Breast epithelium (tissue), 4 donors: ENCODE measurements at regions of chr13 and their contacts with region 1.

Region 1: GRCh38 chr13:106835477-106835876 is 267.5 kb upstream of the ARGLU1 start:
- DNase-seq: no peak
- H3K4me3 ChIP-seq: no peak overlapping the region
- H3K27ac ChIP-seq: no peak overlapping the region
- H3K4me1 ChIP-seq: no peaks in the 10 kb centered on the region
- H3K27me3 ChIP-seq: no peaks in the 10 kb centered on the region
- CTCF ChIP-seq: no peak
- POLR2A ChIP-seq: no peak

Region 2: GRCh38 chr13:105838231-105838630 is 997.2 kb before region 1 on chr13:
- intact Hi-C with region 1: no loop called
- DNase-seq: no peak
- H3K4me3 ChIP-seq: no peak overlapping the region
- H3K27ac ChIP-seq: no peak overlapping the region
- H3K4me1 ChIP-seq: no peaks in the 10 kb centered on the region
- H3K27me3 ChIP-seq: no peaks in the 10 kb centered on the region
- CTCF ChIP-seq: no peak
- POLR2A ChIP-seq: no peak

Region 3: DNA sequence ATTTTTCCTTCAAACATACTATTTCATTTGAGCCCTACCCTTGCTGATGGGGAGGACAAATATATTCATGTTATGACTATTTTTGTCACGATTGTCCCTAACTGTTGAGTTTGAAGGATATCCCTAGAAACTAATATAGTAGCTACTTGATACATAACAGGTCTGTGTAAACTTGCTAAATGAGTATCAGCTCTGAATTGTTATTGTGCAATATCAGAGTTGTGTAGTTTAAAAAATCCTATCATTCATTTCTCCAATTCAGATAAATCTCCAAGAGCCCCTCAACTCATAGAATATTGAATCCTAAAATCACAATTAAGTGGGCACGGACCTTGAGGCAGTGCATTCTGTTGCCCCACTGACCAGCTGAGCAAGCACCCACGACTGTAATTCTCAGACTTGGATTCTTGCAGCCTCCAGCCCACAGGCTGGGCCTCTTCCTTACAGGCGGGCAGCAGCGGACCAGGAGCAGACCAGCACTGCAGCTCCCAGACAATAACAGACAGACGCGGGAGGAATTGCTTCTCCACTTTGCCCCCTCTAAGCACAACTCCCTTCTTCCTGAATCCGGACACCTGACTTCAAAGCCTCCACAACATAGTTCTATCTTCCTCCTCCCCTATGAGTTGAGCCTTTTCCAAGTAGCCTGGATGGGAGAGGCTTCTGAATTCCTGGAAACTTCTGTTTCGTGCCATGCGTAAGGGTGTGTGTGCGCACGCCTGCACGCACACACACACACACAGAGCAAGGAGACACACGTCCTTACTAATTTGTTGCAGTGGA is 70.1 kb after region 1 on chr13:
- intact Hi-C with region 1: loop called (anchors 2 kb)
- DNase-seq: no peak
- H3K4me3 ChIP-seq: no peak overlapping the region
- H3K27ac ChIP-seq: no peak overlapping the region
- H3K4me1 ChIP-seq: no peaks in the 10 kb centered on the region
- H3K27me3 ChIP-seq: no peaks in the 10 kb centered on the region
- CTCF ChIP-seq: no peak
- POLR2A ChIP-seq: no peak

Region 4: GRCh38 chr13:107907065-107907805 is 1071.8 kb after region 1 on chr13:
- intact Hi-C with region 1: loop called (anchors 5 kb)
- DNase-seq: no peak
- H3K4me3 ChIP-seq: no peak overlapping the region
- H3K27ac ChIP-seq: no peak overlapping the region
- H3K4me1 ChIP-seq: no peaks in the 10 kb centered on the region
- H3K27me3 ChIP-seq: no peaks in the 10 kb centered on the region
- CTCF ChIP-seq: no peak
- POLR2A ChIP-seq: no peak